Heart right ventricle (tissue), 16 donors: ENCODE measurements at regions of chr17 and their contacts with region 1.

Region 1: DNA sequence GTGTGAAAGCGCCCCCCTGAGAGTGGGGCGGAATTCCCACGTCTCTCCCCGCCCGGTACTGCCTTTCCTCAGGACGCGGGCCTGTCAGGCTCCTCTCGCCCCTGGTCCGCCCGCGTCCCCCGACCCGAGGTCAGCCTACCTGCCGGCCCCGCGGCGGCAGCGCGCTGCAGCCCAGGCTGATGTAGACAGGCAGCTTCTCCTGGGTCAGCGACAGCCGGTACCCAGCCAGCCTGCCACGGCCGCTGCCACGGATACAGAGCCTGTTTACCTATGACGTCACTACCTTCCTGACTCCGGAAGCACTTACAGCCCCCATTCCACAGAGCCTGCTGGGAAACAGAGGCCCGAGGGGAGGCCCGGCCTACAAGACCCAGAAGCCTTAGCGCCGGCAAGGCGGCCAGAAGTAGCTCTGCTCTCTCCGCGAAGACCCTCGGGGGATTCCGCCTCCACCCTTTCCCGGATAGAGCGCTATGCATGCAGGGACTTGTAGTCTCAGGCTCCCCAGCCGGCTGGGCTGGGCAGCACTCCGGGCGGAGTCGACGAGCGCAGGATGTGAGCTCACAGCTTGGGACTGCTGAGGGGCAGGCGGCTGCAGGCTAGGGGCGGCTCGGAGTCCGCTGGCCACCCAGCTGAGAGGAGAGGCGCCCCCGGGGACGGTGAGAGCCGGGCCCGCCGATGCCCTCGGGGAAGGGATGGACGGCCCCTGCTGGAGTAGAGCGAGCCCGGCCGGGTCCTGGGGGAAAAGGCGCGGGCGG is at the starts of genes IFT20 and TNFAIP1:
- DNase-seq: peak; percentile 98 to 99
- ATAC-seq: peak; percentile 95 to 97 (median 96)
- H3K4me3 ChIP-seq: peak within 1 kb of the TSS; percentile 74 to 95 (median 88)
- H3K27ac ChIP-seq: peak within 1 kb of the TSS; percentile 90 to 99 (median 98)
- H3K4me1 ChIP-seq: peaks cover 15 to 63% (median 57%) of the 10 kb centered on the region in 9 donors
- H3K27me3 ChIP-seq: no peaks in the 10 kb centered on the region
- CTCF ChIP-seq: peak in 1 of 9 donors; percentile 8
- total RNA-seq, gene IFT20: 8.5 to 15.4 (median 10.8) TPM
- total RNA-seq, gene TNFAIP1: 33.0 to 87.6 (median 45.8) TPM

Region 2: GRCh38 chr17:28041068-28041843 is 294.1 kb before region 1 on chr17:
- intact Hi-C with region 1: loop called in 2 of 10 experiments (anchors 5 to 10 kb)
- DNase-seq: peak; percentile 99 to 100
- ATAC-seq: peak; percentile 98 to 99 (median 98)
- H3K4me3 ChIP-seq: peak overlapping the region; percentile 69 to 97 (median 94)
- H3K27ac ChIP-seq: peak overlapping the region; percentile 79 to 98 (median 96)
- H3K4me1 ChIP-seq: peaks cover 7 to 50% (median 41%) of the 10 kb centered on the region in 9 donors
- H3K27me3 ChIP-seq: no peaks in the 10 kb centered on the region
- CTCF ChIP-seq: no peak

Region 3: DNA sequence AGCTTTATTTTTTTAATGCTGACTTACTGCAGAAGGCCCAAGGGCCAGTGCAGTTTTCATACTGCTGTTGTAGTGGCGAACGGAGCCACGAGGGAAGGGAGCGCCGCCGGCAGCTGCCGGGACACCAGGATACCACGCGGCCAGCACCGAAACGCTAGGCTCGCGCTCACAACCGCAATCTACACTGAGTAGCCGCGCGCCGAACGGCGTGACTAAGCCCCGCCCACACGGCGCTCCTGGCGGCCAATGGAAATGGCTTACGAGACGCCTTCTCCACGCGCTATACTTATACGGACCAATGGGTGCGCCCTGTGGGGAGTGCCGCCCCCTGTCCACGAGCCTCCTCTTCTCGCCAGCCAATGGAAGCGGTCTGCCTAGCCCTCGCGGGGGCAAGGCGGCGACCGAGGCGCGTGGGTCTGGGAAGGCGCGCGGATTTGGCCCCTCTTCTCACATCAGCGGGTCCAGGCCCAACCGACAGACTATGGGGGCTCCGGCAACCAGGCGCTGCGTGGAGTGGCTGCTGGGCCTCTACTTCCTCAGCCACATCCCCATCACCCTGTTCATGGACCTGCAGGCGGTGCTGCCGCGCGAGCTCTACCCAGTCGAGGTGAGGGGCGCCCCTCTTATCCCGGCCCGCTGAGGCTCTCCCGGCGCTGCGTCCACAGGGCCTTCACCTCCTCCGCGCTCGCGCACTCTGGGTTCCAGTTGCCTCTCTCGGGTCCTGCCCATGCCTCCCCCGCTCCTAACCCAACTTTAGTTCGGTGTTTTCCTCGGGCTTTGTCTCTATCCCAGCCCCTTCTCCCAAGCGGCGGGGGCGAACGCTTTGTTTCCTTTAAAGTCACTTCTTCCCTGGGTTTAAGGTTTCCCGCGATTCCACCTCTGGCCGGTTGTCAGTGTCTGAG is 16.4 kb before region 1 on chr17 and contains the start of gene TMEM97:
- intact Hi-C with region 1: loop called in 2 of 10 experiments (anchors 2 kb)
- DNase-seq: peak; percentile 96
- ATAC-seq: peak; percentile 99 to 100 (median 100)
- H3K4me3 ChIP-seq: peak within 1 kb of the TSS; percentile 39 to 80 (median 62)
- H3K27ac ChIP-seq: peak within 1 kb of the TSS in 5 of 10 donors; percentile 11 to 48 (median 18)
- H3K4me1 ChIP-seq: peaks cover 3 to 22% (median 16%) of the 10 kb centered on the region in 9 donors
- H3K27me3 ChIP-seq: no peaks in the 10 kb centered on the region
- CTCF ChIP-seq: peak in 5 of 9 donors; percentile 20 to 40 (median 36)
- total RNA-seq, gene TMEM97: 2.3 to 4.4 (median 3.2) TPM

Region 4: DNA sequence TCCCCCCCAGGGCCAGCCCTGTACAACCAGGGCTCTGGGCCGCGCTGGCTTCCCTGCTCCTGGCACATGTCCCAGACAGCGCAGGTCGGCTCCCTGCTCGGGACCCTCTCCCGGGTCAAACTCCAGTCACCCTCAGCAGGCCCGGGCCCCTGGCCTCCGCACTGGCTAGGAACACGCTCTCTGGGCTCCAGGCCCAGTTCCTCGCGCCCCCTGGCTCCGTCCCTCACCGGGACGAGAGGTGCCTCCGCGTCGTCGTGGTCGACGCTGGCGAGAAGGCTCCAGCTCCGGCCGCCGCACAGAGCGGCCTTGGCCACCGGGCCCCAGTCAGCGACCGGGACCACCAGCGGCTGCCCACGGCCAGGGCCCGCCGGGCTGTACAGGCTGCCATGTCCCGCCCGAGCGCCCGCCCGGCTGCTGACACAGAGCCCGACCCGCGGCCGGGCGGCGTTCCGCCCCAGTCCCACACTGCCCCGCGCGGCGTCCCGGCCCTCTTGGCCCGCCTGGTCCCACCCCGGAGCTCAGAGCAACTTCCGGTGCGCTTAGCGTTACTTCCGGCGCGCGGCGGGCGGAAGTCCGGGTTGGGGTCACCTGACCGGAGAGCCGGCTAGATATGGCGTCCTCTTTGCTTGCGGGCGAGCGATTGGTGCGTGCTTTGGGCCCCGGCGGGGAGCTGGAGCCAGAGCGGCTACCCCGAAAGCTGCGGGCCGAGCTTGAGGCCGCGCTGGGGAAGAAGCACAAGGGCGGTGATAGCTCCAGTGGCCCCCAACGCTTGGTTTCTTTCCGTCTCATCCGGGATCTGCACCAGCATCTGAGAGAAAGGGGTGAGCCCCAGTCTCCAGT is 21.9 kb after region 1 on chr17 and contains the start of gene POLDIP2:
- intact Hi-C with region 1: loop called in 4 of 10 experiments (anchors 1 to 2 kb)
- DNase-seq: peak; percentile 95 to 96
- ATAC-seq: peak; percentile 99 to 100 (median 100)
- H3K4me3 ChIP-seq: peak within 1 kb of the TSS; percentile 67 to 100 (median 95)
- H3K27ac ChIP-seq: peak within 1 kb of the TSS; percentile 60 to 98 (median 95)
- H3K4me1 ChIP-seq: peaks cover 7 to 30% (median 27%) of the 10 kb centered on the region in 9 donors
- H3K27me3 ChIP-seq: no peaks in the 10 kb centered on the region
- CTCF ChIP-seq: peak in 4 of 9 donors; percentile 14 to 35 (median 31)
- total RNA-seq, gene POLDIP2: 144 to 176 (median 160) TPM